ENCODE measurements at regions of chr2 and their contacts with region 1.

Region 1: GRCh38 chr2:16201848-16202247 is 261.5 kb downstream of the MYCN start:
- DNase-seq: no peak

Region 2: DNA sequence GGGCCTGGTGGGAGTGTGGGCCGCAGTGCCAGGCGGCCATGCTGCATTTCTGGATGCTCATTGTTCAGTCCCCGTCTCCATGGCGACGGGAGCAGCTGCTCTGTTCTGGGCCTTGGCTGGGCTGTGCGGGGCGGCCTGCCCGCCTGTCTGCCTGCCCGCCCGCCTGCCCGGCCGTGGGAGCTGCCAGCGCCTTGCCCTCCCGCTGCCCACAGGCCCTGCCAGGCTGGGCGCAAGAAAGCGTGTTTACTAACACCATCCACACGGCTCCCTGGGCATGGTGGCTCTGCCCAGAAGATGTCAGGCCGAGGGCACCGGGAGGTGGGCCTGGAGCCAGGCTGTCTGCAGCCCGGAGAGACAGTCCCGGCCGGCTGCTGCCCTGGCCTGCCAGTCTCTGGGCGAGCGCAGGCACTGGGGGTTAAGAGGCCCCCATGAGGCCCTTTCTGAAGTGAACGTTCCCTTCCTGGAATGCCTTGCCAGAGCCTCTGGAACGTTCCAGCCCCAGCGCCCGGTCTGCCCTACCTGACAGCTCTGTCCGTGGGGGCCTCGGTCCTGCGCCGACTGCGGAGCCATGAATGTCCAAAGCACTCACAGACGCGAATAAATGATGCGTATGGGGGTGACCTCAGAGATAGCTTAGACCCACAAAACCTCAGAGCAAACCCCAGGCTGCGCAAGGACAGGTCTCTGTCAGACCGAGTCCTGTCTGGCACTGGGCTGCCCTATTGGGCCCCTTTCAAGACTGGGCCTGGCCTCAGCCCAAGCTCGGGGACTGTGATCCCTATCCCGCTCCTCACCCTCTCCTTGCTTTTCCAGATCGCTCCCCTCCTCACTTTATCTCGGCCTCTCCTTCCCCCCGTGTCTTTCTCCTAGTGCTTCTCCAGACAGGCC is 217.2 kb before region 1 on chr2:
- intact Hi-C with region 1: loop called in 1 of 2 experiments (anchors 10 kb)
- DNase-seq: no peak

Region 3: DNA sequence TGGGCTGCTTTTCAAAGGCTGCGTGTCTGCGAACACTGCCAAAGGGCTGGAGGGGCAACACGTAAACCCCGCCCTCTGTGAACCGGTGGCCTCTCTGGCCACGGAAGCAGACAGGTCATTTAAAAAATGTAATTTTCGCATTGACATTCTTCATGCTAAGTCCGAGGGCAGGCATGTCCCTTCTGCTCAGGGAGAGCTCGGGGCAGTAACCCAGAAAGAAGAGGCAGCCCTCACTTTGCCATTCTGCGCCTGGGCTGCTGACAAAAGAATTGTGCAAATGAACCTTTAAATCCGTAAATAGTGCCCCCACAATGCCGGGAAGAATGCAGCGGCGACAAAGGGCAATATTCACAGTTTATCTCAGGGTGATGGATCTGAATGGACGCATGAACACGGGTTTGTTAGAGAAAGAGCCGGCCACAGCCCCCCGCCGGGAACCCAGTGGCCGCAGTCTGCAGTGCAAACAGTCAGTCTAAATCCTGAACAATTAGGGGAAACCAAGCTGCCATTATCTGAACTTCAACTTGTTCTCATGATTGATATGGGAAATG is 35.3 kb before region 1 on chr2:
- intact Hi-C with region 1: no loop called
- DNase-seq: no peak

Region 4: DNA sequence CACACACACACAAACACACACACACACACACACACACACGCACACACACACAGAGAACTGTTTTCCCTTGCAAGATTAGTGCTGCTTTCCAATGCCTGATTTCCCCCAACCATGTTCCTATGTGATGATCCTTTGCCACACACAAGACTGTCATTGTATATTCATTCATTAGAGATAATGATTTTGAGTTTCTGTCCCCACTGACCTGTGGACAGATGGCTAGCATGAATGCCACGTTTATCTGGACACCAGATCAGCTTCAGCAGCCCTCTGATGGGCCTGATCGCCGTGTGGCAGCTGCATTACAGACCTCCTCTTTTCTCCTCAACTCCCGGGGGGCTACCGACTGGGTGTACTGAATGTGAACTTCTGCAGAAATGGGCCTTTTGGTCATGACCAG is 91.5 kb after region 1 on chr2:
- intact Hi-C with region 1: no loop called
- DNase-seq: no peak

Region 5: GRCh38 chr2:17160594-17160993 is 958.7 kb after region 1 on chr2:
- intact Hi-C with region 1: loop called in 1 of 2 experiments (anchors 5 kb)
- DNase-seq: no peak

Measured in posterior vena cava (tissue), 2 donors.